ENCODE measurements at regions of chr12 and their contacts with region 1.

Region 1: GRCh38 chr12:68440068-68440581 is 108.0 kb upstream of the MDM1 start:
- DNase-seq: no peak
- H3K4me3 ChIP-seq: no peak overlapping the region
- H3K27ac ChIP-seq: no peak overlapping the region
- H3K4me1 ChIP-seq: peaks cover 0 to 14% (median under 1%) of the 10 kb centered on the region in 4 donors
- H3K27me3 ChIP-seq: no peaks in the 10 kb centered on the region
- CTCF ChIP-seq: no peak
- EP300 ChIP-seq: no peak
- POLR2A ChIP-seq: no peak

Region 2: GRCh38 chr12:68279227-68280054 is 160.7 kb before region 1 on chr12:
- intact Hi-C with region 1: no loop called
- DNase-seq: peak in 1 of 2 donors; percentile 53
- H3K4me3 ChIP-seq: no peak overlapping the region
- H3K27ac ChIP-seq: no peak overlapping the region
- H3K4me1 ChIP-seq: peaks cover 0 to 6% (median 0%) of the 10 kb centered on the region in 4 donors
- H3K27me3 ChIP-seq: no peaks in the 10 kb centered on the region
- CTCF ChIP-seq: no peak
- EP300 ChIP-seq: no peak
- POLR2A ChIP-seq: no peak

Region 3: DNA sequence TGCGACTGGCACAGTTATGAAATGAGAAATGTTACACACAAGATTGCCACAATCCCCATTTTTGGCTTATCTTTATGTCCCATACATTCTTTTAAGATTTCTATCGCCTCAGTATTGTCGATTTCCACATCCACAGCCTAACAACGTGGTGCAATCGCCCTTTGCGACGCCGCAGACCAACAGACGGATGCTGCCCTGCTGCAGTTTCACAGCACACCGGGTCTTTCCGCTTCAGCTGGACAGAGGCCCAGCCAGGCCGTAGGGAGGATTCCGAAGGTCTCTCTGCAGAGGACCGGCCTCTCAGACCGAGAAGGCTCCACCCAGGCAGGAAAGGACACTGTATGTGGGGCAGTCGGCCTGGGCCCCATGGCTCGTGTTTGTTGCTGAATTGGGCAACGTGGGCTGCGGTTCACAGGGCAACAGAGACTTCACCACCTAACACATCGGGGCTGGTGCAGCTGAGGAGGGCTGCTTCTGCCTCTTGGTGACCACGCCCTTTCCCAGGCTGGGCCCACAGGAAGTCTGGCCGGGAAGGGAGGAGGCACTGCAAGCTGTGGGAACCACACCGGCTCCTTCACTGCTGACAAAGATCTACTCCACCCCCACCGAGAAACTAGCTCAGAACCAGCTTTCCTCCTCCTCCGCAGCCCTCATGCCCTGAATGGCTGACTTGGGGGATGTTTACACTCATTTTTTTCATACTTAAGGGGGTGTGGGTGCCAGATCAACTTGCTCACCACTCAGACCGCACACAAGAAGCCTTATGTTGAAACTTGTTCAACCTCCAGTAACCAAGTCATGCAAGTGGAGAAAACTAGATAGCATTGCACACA is 75.0 kb before region 1 on chr12:
- intact Hi-C with region 1: loop called (anchors 10 kb)
- DNase-seq: peak; percentile 89 to 96
- H3K4me3 ChIP-seq: peak overlapping the region; percentile 32 to 50 (median 40)
- H3K27ac ChIP-seq: peak overlapping the region; percentile 79 to 94 (median 86)
- H3K4me1 ChIP-seq: peaks cover 7 to 30% (median 16%) of the 10 kb centered on the region in 4 donors
- H3K27me3 ChIP-seq: no peaks in the 10 kb centered on the region
- CTCF ChIP-seq: peak in 1 of 7 experiments; percentile 9
- EP300 ChIP-seq: no peak
- POLR2A ChIP-seq: no peak

Region 4: DNA sequence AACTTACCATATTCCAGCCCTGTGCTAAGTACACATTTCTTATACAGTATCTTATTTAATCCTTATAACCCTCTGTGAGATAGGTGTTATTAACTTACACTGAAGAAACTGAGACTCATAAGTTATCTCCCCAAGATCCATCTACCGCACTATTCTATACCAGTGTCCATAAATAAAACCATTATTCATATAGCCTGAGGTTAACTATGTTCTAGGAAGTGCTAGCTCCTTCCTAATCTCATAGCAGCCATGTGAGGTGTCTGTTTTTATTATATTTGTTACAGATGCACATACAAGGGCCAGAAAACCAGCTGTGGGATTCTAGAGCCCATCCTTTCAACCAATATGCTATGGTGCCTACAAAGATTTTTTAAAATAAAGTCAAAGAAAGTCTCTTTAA is 70.3 kb after region 1 on chr12:
- intact Hi-C with region 1: no loop called
- DNase-seq: no peak
- H3K4me3 ChIP-seq: no peak overlapping the region
- H3K27ac ChIP-seq: no peak overlapping the region
- H3K4me1 ChIP-seq: no peaks in the 10 kb centered on the region
- H3K27me3 ChIP-seq: no peaks in the 10 kb centered on the region
- CTCF ChIP-seq: no peak
- EP300 ChIP-seq: no peak
- POLR2A ChIP-seq: no peak